PC-9 (cell line): ENCODE measurements at regions of chr6 and their contacts with region 1.

Region 1: DNA sequence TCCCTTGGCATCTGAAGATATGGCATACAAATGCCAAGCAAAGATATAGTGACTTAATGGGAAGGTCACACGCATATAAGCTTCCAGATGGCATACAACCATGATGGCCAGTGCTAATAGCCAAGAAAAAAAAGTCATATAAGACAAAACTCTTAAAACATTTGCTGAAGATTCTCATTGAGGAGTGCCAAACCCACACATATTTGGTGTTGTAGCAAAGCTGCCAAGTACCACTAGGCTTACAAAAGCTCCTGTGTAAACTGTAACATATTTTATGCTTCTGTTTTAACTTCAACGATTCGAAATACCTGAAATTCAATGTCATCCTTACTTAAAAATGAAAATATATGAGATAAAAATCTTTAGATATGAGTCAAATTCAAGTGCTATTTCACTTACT is 123.0 kb downstream of the HMGCLL1 start:
- DNase-seq: no peak
- H3K4me3 ChIP-seq: no peak overlapping the region
- H3K27ac ChIP-seq: no peak overlapping the region
- H3K4me1 ChIP-seq: no peaks in the 10 kb centered on the region
- H3K27me3 ChIP-seq: no peaks in the 10 kb centered on the region
- CTCF ChIP-seq: no peak

Region 2: DNA sequence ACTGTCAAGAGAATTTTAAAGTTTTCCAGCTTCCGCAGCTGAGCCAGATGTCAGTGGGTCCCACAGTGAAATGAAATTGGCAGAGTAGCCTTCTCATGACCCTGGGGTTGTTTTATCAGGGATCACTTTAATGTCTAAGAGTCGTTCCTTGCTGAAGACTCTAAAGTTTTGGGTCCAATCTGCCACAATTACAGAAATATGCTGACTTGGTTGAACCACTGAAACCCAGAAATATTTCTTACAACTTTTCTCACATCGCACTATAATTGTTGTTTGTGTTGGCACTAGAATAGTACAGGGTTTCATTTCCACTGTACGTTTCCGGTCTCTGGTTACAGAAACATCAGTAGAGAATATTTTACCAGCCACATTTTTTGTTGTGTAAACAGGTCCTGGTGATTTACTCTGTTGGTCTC is 13.9 kb after region 1 on chr6:
- CTCF ChIA-PET with region 1: no interaction called
- POLR2A ChIA-PET with region 1: no interaction called
- intact Hi-C with region 1: no loop called
- DNase-seq: no peak
- H3K4me3 ChIP-seq: no peak overlapping the region
- H3K27ac ChIP-seq: no peak overlapping the region
- H3K4me1 ChIP-seq: no peaks in the 10 kb centered on the region
- H3K27me3 ChIP-seq: no peaks in the 10 kb centered on the region
- CTCF ChIP-seq: no peak

Region 3: DNA sequence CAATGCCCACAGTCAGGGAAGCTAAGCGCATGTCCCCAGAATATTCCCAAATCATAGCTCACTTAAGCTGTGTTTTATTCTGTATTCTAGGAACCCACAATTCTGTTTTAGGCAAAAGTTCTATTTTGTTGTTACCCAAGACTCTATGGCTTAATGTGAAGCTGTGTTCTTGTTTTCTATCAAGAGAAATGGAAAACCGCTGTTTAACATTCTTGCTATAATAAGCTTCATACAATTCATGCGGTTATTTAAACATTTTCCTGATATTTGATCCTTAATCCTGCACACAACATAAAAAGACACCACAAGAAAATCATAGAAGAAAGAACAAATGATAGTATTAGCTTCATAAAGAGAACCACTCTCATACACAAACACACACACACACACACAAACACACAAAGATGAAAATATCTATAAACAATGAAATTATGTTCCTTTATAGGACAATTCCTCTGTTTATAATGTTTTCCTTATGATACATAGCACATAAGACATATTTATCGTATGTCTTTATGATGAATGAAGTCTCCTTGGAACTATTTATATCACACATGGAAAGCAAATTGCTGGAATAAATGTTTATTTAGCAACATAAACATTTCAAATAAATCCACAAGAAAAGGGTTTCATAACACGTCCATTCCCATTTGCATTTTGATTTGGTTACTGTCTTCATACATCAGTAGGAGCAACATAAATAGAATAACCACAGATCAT is 807.7 kb after region 1 on chr6:
- CTCF ChIA-PET with region 1: no interaction called
- POLR2A ChIA-PET with region 1: interaction called, 11 read pairs
- intact Hi-C with region 1: no loop called
- DNase-seq: no peak
- H3K4me3 ChIP-seq: no peak overlapping the region
- H3K27ac ChIP-seq: no peak overlapping the region
- H3K4me1 ChIP-seq: no peaks in the 10 kb centered on the region
- H3K27me3 ChIP-seq: peaks cover 4% of the 10 kb centered on the region; the same call in 1 of the 2 replicates
- CTCF ChIP-seq: no peak